Dendritic cell treated with granulocyte-macrophage colony-stimulating factor and Interleukin-4, amounts not matched to agents 40 ng/mL and 50 ng/mL, for 4 days (primary cell): ENCODE measurements at regions of chrX and their contacts with region 1.

Region 1: GRCh38 chrX:37779857-37780256 is at the start of gene CYBB:
- H3K4me3 Mint-ChIP-seq: peak within 1 kb of the TSS; percentile 76
- H3K27ac Mint-ChIP-seq: peak within 1 kb of the TSS; percentile 90
- H3K4me1 Mint-ChIP-seq: peaks cover 45% of the 10 kb centered on the region
- H3K27me3 Mint-ChIP-seq: no peaks in the 10 kb centered on the region

Region 2: DNA sequence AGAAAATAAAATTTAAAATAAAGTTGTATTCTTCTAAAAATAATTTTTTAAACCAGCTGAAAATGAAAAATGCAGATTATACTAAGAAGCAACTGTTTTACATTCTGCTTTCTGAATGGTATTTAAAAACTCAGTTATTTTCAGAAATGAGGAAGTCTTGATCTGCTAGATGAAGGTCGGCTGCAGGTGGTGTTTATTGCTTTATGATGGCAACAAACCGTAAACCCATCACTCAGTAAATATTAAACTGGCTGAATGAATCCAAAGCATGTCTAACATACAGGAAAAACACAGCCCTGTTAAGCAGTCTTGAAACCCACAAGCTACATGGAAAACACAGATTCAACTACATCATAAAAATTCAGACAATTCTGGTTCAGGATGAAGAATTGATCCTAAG is 38.2 kb after region 1 on chrX:
- intact Hi-C with region 1: loop called (anchors 5 kb)
- H3K4me3 Mint-ChIP-seq: no peak overlapping the region
- H3K27ac Mint-ChIP-seq: no peak overlapping the region
- H3K4me1 Mint-ChIP-seq: peaks cover 37% of the 10 kb centered on the region
- H3K27me3 Mint-ChIP-seq: no peaks in the 10 kb centered on the region

Region 3: DNA sequence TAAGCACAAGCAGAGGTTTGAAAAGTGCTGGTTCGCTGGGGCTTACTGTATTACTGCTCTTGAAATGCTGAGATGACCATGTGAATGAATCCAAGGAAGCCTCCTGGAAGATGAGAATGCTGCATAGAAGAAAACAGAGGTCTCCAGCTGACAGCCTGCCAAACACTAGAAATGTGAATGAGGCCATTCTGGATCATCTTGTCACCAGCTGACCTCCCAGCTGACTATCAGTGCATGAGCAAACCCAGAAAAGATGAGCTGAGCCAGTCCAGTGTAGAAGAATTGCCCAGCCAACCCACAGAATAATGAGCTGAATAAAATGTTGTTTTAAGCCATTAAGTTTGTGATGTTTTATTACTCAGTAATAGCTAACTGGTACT is 116.6 kb after region 1 on chrX:
- intact Hi-C with region 1: no loop called
- H3K4me3 Mint-ChIP-seq: no peak overlapping the region
- H3K27ac Mint-ChIP-seq: no peak overlapping the region
- H3K4me1 Mint-ChIP-seq: no peaks in the 10 kb centered on the region
- H3K27me3 Mint-ChIP-seq: no peaks in the 10 kb centered on the region